Upper lobe of right lung (tissue), 1 donor: ENCODE measurements at regions of chr11 and their contacts with region 1.

Region 1: DNA sequence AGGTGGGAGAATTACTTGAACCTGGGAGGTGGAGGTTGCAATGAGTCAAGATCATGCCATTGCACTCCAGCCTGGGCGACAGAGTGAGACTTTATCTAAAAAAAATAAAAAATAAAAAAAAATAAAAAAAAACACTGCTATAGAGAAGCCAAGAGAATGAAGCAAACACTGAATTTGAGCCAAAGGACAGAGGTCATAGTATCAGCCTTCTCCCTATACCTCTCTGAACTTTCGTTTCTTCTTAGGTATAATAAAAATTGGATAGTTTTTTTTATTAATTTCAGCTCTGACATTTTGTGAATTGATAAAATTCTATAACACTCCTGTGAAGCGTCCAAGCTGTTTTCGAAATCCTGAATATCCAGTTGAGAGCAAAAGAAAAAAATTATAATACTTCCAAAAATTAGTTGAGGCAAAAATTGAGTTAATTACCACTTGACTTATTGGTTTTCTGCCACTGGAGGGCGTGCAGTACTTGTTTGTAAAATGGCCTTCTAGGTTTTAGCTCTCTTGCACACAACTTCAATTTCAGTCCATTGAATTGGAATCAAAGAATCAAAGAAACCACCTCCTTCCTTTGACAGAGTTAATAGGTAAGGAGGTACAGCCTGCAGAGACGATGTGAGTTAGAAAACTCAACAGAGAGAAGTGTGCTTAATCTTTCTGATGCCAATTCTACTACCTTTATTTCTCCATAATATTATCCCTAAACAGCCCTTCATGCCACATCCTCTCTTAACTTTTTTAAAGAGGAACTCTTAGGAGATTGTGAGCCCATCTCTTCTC is 143.2 kb downstream of the BBOX1 start:
- DNase-seq: no peak
- ATAC-seq: peak; percentile 53
- H3K4me3 ChIP-seq: no peak overlapping the region
- H3K27ac ChIP-seq: no peak overlapping the region
- H3K4me1 ChIP-seq: no peaks in the 10 kb centered on the region
- H3K27me3 ChIP-seq: peaks cover 7% of the 10 kb centered on the region
- CTCF ChIP-seq: peak; percentile 73

Region 2: DNA sequence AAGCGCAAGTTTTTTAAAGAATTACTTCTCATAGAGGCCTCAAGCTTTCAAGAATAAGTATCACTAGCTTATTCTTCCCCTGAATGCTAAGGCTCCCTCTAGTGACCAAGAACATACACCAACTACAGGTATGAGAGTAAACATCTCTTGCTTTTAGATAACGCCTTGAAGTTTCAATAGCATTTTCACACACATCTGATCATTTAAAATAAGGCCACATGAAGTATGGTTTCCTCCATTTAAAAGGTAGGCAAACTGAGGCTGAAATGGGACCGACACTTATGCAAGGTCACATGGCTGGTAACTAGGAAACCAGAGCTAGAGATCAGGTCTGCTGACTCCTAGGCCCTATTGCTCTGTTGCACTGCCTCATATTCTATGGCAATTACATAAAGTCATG is 112.6 kb after region 1 on chr11:
- intact Hi-C with region 1: loop called (anchors 10 kb)
- DNase-seq: no peak
- ATAC-seq: peak; percentile 69
- H3K4me3 ChIP-seq: no peak overlapping the region
- H3K27ac ChIP-seq: no peak overlapping the region
- H3K4me1 ChIP-seq: no peaks in the 10 kb centered on the region
- H3K27me3 ChIP-seq: no peaks in the 10 kb centered on the region
- CTCF ChIP-seq: peak; percentile 65

Region 3: DNA sequence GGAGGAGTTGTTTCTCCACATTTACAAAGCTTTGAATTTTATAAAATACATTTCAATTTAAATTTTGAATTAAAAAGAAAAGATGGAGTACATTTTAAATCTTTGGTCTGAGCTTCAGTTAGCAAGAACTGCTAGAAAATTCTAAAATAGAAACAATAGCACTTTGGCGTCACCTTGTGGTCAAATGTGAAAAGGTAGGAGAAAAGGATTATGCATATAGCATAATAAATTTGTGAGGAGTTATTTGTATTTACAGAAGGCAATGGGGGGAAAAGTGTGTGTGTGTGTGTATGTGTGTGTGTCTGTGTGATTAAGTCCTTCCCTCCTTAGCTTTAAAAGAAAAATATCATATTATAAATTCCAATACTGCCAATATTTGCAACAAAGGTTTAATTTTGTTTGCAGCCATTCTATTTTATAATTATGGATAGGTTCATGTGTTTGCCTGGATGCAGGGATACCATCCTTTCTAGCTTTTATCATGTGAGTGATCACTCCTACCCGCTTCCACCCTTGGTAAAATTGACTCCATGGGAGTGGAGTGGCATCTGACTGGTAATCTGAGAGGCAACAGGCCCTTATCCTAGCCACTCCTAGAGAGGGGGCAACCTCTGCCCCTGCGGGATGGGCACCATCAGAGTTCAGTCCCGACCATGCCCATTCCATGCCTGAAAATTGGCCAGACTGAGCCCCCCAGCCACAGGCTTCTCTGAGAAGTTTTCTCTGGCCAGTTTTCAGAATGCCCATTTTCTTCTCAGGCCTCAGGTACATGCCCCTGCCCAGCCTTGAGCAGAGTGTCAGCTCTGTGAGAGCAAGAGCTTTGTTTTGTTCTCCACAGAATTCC is 302.3 kb after region 1 on chr11:
- intact Hi-C with region 1: loop called (anchors 5 kb)
- DNase-seq: no peak
- ATAC-seq: peak; percentile 61
- H3K4me3 ChIP-seq: no peak overlapping the region
- H3K27ac ChIP-seq: no peak overlapping the region
- H3K4me1 ChIP-seq: no peaks in the 10 kb centered on the region
- H3K27me3 ChIP-seq: no peaks in the 10 kb centered on the region
- CTCF ChIP-seq: peak; percentile 91